Left cardiac atrium (tissue), 4 donors: ENCODE measurements at regions of chr20 and their contacts with region 1.

Region 1: DNA sequence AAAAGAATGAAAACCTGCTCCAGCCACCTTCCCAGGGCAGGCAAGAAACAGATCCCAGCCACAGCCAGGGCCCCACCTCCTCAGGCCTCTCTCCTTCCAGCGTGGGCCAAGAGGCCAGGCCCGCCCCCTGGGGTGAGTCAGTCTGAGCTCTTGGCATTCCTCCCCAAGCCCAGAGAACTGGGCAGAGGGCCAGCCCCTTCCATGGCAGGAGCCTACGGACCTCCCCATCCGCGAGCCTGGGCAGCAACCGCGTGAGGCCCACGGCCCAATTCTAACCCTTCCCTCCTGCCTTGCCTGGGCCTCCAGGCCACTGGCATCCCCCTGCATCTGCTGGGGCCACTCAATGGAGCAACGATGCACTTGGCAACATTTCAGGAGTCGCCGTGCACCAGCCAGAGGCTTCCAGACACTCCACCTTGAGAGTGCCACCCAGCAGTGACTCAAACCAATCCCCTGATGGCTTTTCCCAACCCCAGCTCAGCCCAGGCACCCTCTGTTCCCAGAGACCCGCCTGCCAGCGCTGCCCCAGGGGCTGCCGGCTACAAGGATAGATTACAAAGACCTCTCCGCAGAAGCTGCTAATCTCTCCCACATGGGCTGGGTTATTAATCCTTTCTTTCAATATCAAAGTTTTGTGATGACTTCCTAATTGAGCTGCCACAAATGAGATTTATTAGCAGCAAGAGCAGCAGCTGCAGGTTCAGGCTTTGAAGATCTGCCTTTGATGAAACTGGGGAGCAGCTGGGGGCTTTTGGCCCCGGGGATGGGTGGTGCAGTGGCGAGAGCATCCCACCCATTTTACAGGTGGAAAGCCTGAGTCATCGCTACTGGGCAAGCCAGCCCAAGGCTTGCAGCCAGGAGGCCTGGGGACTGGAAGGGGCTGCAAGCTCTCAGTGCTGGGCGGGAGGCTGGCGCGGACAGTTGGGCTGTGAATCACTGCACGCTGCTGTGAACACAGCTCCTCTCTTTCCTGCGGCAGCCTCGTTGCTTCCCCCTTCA is 85.7 kb downstream of the NFATC2 start:
- DNase-seq: peak; percentile 95
- ATAC-seq: peak; percentile 97 to 98

Region 2: GRCh38 chr20:51128198-51128597 is 328.6 kb before region 1 on chr20:
- intact Hi-C with region 1: no loop called
- DNase-seq: no peak
- ATAC-seq: no peak

Region 3: DNA sequence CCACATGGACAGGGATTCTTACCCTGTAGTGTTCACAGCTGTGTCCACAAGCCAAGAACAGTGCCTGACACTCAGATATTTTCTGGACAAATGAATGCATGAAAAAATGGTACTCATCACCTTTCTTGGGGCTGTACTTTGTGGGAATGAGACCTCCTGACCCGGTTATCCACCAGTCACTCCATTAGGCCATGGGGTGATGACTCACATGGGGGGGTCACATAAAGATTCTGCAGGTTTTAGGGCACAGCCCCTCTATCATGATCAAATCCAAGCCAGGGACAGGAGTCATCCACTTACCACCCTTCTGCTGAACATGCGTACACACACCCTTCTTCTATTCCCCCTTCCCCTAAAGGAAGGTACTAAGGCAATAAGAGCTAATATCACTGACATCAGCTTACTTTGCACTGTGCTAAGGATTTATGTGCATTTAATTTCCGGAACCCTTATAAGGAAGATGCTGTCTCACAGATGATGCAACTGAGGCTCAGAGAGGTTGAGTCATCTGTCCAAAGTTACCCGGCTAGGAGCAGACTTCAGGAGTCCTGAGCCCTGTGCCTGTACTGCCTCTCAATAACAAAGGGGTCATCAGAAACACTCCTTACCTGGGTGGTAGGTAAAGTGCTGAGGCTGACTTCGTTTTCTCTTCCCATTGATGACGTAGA is 22.1 kb before region 1 on chr20:
- intact Hi-C with region 1: no loop called
- DNase-seq: no peak
- ATAC-seq: no peak

Region 4: GRCh38 chr20:51562332-51563155 is 105.7 kb after region 1 on chr20:
- intact Hi-C with region 1: loop called in 1 of 2 experiments (anchors 10 kb)
- DNase-seq: peak; percentile 89
- ATAC-seq: peak; percentile 80 to 84

Region 5: GRCh38 chr20:51650685-51651134 is 193.9 kb after region 1 on chr20:
- intact Hi-C with region 1: no loop called
- DNase-seq: no peak
- ATAC-seq: peak in 1 of 2 donors; percentile 27

Region 6: DNA sequence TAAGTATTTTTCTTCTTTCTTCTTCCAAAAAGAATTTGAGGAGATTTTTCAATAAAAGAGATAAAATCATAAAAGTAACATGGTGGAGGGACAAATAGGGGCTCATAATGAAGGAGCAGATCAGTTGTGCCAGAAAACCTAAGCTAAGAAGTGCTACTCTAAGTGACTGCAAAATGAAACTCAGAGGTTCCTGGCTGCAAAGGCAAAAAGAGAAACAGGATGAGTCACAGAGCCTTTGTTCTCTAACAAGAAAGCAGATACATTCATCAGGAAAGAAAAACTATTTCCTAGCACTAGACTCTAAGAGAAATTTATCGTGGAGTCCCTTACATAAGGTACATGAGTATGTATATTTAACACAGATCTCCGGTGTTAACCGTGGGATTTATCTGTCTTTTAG is 1565.1 kb after region 1 on chr20:
- intact Hi-C with region 1: no loop called
- DNase-seq: no peak
- ATAC-seq: no peak